ENCODE measurements at regions of chr1 and their contacts with region 1.

Region 1: DNA sequence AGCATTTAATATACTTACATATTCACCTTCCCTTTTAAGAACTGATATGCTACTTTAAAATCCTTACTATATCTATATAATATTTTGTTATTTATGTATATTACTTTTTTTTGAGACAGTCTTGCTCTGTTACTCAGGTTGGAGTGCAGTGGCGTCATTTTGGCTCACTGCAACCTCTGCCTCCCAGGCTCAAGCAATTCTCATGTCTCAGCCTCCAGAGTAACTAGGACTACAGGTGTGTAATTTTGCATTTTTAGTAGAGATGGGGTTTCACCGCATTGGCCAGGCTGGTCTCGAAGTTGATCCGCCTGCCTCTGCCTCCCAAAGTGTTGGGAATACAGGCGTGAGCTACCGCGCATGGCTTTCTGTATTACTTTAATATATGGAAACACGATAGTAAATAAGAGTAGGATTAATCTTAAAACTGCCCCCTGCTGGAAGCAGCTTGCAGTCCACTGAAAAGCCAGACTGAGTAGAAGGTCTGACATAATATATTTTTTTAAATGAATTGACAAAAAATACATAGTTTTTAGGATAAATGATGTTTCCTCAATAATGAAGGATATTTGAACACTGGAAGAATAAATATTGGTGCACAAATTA is 24.4 kb downstream of the RCAN3 start:
- DNase-seq: peak; percentile 58
- H3K4me3 Mint-ChIP-seq: no peak overlapping the region
- H3K27ac Mint-ChIP-seq: no peak overlapping the region
- H3K4me1 Mint-ChIP-seq: peaks cover 57% of the 10 kb centered on the region
- H3K27me3 Mint-ChIP-seq: no peaks in the 10 kb centered on the region

Region 2: DNA sequence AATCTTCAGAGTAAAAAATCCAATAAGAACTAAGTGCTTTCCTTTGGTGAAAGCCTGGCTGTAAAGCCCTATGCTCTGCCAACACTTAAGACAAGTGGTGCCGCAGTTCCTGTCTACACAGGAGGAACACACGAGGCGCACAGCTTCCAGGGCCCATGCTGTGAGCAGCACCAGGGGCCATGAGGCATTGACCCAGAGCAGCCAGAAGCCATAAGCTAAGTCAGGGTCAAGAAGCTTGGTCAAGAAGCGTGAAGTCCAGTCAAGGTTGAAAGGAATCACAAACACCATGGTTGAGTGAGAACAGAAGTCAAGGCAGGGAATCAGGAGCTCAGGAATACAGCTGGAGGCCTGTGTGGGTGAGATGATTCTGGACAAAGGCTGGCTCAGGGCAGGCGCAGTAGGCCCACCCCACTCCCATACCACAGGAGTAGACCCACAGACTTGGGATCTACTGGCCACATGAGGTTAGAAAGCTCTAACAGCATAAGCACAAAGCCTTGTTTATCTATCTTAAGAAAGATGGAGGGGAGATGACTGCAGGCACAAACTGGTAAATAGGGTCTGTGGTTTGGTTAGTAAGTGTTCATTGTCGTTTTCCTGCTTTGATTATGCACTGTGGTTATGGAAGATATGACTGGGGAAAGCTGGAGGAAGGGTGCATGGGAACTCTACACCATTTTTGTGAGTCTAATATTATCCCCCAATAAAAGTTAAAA is 67.3 kb before region 1 on chr1:
- CTCF ChIA-PET with region 1: interaction called, 11 read pairs
- POLR2A ChIA-PET with region 1: no interaction called
- intact Hi-C with region 1: no loop called
- DNase-seq: no peak
- H3K4me3 Mint-ChIP-seq: no peak overlapping the region
- H3K27ac Mint-ChIP-seq: peak overlapping the region; percentile 20
- H3K4me1 Mint-ChIP-seq: peaks cover 21% of the 10 kb centered on the region
- H3K27me3 Mint-ChIP-seq: no peaks in the 10 kb centered on the region

Region 3: GRCh38 chr1:24514946-24515345 is 12.1 kb before region 1 on chr1:
- CTCF ChIA-PET with region 1: interaction called, 30 read pairs
- POLR2A ChIA-PET with region 1: interaction called, 3 read pairs
- intact Hi-C with region 1: no loop called
- DNase-seq: no peak
- H3K4me3 Mint-ChIP-seq: no peak overlapping the region
- H3K27ac Mint-ChIP-seq: no peak overlapping the region
- H3K4me1 Mint-ChIP-seq: peaks cover 67% of the 10 kb centered on the region
- H3K27me3 Mint-ChIP-seq: no peaks in the 10 kb centered on the region

Region 4: DNA sequence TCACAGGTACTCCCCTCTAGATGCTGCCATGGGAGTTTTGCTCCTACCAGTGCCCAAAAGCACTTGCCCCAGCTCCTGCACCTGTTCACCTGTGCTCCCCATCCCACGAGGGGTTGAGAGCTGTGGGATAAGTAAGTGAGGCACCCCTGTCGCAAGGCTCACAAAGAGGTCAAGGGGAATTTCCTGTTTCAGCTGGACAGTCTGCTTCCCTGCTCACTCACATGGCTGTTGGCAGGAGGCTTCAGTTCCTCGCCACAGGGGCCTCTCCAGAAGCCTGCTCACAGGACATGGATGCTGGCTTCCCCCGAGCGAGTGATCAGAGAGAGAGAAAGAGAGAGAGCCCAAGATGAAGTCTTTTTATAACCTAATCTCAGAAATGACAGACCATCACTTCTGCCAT is 20.2 kb after region 1 on chr1:
- CTCF ChIA-PET with region 1: interaction called, 11 read pairs
- POLR2A ChIA-PET with region 1: no interaction called
- intact Hi-C with region 1: no loop called
- DNase-seq: no peak
- H3K4me3 Mint-ChIP-seq: no peak overlapping the region
- H3K27ac Mint-ChIP-seq: no peak overlapping the region
- H3K4me1 Mint-ChIP-seq: peaks cover 17% of the 10 kb centered on the region
- H3K27me3 Mint-ChIP-seq: no peaks in the 10 kb centered on the region

Measured in activated CD4-positive, alpha-beta memory T cell treated with anti-CD3 and anti-CD28 coated beads for 36 hours (primary cell).